Endothelial cell of umbilical vein (primary cell): ENCODE measurements at regions of chr20 and their contacts with region 1.

Region 1: DNA sequence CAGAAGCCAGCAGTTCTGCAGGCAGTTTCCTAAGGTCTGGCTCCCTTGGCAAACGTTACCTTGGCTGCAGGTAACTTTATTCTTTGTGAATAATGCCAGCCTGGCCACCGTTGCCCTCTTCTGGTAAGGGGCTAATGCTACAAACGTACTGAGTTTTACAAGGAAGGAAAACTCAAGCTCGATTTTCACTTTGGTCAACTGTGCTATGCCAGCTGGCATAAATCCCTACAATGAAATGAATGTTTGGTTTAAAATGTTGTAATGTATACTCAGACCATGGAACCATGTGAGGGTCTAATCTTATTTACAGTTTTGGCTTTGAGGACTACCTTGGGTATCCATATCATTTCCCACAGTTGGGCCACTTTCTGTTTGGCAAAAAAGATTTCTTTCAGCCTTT is 101.4 kb downstream of the SLX4IP start:
- DNase-seq: peak; percentile 41
- H3K4me3 ChIP-seq: no peak overlapping the region
- H3K27ac ChIP-seq: no peak overlapping the region
- H3K4me1 ChIP-seq: peaks cover 18% of the 10 kb centered on the region
- H3K27me3 ChIP-seq: no peaks in the 10 kb centered on the region
- CTCF ChIP-seq: peak; percentile 49 to 57
- POLR2A ChIP-seq: no peak

Region 2: DNA sequence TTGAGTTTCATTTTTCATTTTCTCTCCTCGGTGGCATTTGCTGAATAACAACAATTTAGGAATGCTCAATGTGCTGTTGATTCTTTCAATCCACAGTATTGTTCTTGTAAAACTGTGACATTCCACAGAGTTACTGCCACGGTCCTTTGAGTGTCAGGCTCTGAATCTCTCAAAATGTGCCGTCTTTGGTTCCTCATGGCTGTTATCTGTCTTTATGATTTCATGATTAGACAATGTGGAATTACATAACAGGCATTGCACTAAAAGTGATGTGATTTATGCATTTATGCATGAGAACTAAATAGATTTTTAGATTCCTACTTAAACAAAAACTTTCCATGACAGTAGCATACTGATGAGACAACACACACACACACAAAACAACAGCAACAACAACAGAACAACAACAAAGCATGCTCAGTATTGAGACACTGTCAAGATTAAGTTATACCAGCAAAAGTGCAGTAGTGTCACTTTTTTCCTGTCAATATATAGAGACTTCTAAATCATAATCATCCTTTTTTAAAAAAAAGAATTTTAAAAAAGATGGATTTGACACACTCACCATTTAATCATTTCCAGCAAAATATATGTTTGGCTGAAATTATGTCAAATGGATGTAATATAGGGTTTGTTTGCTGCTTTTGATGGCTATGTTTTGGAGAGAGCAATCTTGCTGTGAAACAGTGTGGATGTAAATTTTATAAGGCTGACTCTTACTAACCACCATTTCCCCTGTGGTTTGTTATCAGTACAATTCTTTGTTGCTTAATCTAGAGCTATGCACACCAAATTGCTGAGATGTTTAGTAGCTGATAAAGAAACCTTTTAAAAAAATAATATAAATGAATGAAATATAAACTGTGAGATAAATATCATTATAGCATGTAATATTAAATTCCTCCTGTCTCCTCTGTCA is 229.8 kb before region 1 on chr20:
- CTCF ChIA-PET with region 1: no interaction called
- POLR2A ChIA-PET with region 1: no interaction called
- dilution Hi-C with region 1: no loop called
- intact Hi-C with region 1: loop called (anchors 5 kb)
- DNase-seq: peak; percentile 68
- H3K4me3 ChIP-seq: no peak overlapping the region
- H3K27ac ChIP-seq: peak overlapping the region; percentile 87
- H3K4me1 ChIP-seq: peaks cover 38% of the 10 kb centered on the region
- H3K27me3 ChIP-seq: no peaks in the 10 kb centered on the region
- CTCF ChIP-seq: no peak
- POLR2A ChIP-seq: peak; percentile 64

Region 3: DNA sequence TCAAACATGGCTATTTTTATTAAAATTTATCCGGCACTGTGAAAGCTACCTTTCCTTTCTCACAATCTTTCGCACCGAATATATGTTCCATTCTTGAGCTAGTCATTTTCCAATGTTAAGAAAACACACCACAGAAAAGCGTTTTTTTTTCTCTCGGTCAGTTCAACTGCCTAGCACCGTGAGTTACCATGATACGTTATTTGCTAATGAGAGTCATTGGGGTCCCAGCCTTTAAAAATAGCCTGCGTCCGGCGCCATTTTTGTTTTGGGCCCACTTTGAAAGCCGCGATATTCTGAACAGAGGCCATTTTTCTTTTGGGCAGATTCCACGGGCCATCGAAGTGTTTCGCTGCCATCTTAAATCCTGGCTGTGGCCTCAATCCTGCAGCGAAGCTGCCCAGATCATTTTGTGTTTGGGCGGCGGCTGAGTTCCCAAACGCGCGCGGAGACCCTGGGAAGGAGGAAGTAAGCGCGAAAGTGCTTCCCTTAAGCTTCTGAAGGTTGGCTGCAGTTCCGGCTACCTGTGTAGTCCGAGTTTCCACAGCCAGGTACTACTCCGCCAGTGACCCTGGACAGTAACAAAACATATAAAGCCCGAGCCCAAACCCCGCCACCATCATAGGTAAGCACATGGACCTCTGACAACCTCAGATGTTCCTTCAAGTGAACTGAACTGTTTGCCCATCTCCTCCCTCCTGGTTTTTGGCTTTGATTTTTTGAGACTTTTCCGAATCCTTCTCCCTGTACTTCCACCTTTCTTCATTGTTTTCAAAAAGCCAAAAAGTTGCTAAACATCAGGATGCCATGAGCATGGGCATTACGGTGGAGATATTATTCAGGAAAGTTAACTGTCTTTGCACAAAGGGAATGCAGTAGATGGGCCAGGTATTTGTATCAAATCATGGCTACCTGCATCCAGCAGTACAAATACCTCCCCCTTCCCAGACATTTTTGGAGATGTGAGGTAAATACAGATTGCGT is 101.4 kb before region 1 on chr20 and contains the start of gene SLX4IP:
- CTCF ChIA-PET with region 1: interaction called, 16 read pairs
- POLR2A ChIA-PET with region 1: interaction called, 3 read pairs
- dilution Hi-C with region 1: no loop called
- intact Hi-C with region 1: loop called (anchors 1 kb)
- DNase-seq: peak; percentile 95
- H3K4me3 ChIP-seq: peak within 1 kb of the TSS; percentile 96 to 99 (median 97)
- H3K27ac ChIP-seq: peak within 1 kb of the TSS; percentile 97
- H3K4me1 ChIP-seq: peaks cover 15% of the 10 kb centered on the region
- H3K27me3 ChIP-seq: no peaks in the 10 kb centered on the region
- CTCF ChIP-seq: no peak
- POLR2A ChIP-seq: peak; percentile 63
- total RNA-seq, gene SLX4IP: 4.1 and 4.5 TPM in 2 replicates

Region 4: GRCh38 chr20:10521068-10521831 is 15.3 kb before region 1 on chr20:
- CTCF ChIA-PET with region 1: interaction called, 11 read pairs
- POLR2A ChIA-PET with region 1: no interaction called
- dilution Hi-C with region 1: no loop called
- intact Hi-C with region 1: no loop called
- DNase-seq: peak; percentile 77
- H3K4me3 ChIP-seq: no peak overlapping the region
- H3K27ac ChIP-seq: peak overlapping the region; percentile 8
- H3K4me1 ChIP-seq: peaks cover 28% of the 10 kb centered on the region
- H3K27me3 ChIP-seq: no peaks in the 10 kb centered on the region
- CTCF ChIP-seq: no peak
- POLR2A ChIP-seq: no peak